Activated B cell treated with CpG ODN at 0.5 μM for 24 hours (primary cell): ENCODE measurements at regions of chrX and their contacts with region 1.

Region 1: GRCh38 chrX:23066588-23067281 is 67.0 kb downstream of the DDX53 start:
- DNase-seq: no peak
- ATAC-seq: no peak
- H3K4me3 Mint-ChIP-seq: no peak overlapping the region
- H3K27ac Mint-ChIP-seq: no peak overlapping the region
- H3K4me1 Mint-ChIP-seq: no peaks in the 10 kb centered on the region
- H3K27me3 Mint-ChIP-seq: no peaks in the 10 kb centered on the region
- CTCF ChIP-seq: no peak

Region 2: GRCh38 chrX:23127586-23127985 is 60.9 kb after region 1 on chrX:
- CTCF ChIA-PET with region 1: no interaction called
- POLR2A ChIA-PET with region 1: no interaction called
- intact Hi-C with region 1: loop called (anchors 10 kb)
- DNase-seq: no peak
- ATAC-seq: no peak
- H3K4me3 Mint-ChIP-seq: no peak overlapping the region
- H3K27ac Mint-ChIP-seq: no peak overlapping the region
- H3K4me1 Mint-ChIP-seq: no peaks in the 10 kb centered on the region
- H3K27me3 Mint-ChIP-seq: no peaks in the 10 kb centered on the region
- CTCF ChIP-seq: no peak